Caco-2 (cell line): ENCODE measurements at regions of chr16 and their contacts with region 1.

Region 1: DNA sequence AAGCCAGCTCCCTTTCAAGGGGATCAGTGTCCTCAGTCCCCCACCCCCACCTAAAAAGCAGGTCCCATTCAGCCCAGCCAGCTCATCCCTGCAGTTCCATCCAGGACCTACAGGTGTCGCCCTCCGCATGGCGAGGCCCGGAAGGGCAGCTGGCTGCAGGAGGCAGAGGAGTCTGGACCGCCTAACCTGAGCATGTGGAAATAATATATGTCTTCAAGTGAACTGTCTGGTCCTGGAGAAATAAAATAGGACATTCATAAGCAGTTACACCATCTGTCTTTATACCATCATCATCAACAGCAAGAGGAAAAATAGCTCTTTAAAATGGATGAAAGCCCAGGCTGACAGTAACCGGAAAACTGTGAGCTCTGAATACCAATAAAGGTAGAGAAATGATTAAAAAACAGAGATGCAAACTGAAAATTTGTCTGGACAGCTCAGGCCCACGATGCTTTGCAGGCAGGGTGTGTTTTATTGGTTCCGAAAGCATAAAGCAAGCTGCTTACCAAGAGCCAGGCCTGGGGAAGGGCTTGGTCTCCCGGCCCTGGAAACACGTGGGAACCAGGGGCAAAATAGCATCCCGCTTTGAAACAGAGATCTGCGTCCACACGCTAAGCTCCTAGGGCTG is 215.2 kb downstream of the ZFHX3 start:
- DNase-seq: peak; percentile 84 to 93
- H3K4me3 ChIP-seq: no peak overlapping the region
- H3K4me3 Mint-ChIP-seq: no peak overlapping the region
- H3K27ac Mint-ChIP-seq: no peak overlapping the region
- H3K4me1 ChIP-seq: peaks cover 17% of the 10 kb centered on the region
- H3K4me1 Mint-ChIP-seq: no peaks in the 10 kb centered on the region
- H3K27me3 ChIP-seq: no peaks in the 10 kb centered on the region
- H3K27me3 Mint-ChIP-seq: no peaks in the 10 kb centered on the region
- CTCF ChIP-seq: peak; percentile 97 to 99

Region 2: GRCh38 chr16:72612256-72612655 is 220.5 kb before region 1 on chr16:
- CTCF ChIA-PET with region 1: no interaction called
- POLR2A ChIA-PET with region 1: no interaction called
- intact Hi-C with region 1: no loop called
- DNase-seq: no peak
- H3K4me3 ChIP-seq: no peak overlapping the region
- H3K4me3 Mint-ChIP-seq: no peak overlapping the region
- H3K27ac Mint-ChIP-seq: no peak overlapping the region
- H3K4me1 ChIP-seq: no peaks in the 10 kb centered on the region
- H3K4me1 Mint-ChIP-seq: no peaks in the 10 kb centered on the region
- H3K27me3 ChIP-seq: no peaks in the 10 kb centered on the region
- H3K27me3 Mint-ChIP-seq: no peaks in the 10 kb centered on the region
- CTCF ChIP-seq: no peak

Region 3: DNA sequence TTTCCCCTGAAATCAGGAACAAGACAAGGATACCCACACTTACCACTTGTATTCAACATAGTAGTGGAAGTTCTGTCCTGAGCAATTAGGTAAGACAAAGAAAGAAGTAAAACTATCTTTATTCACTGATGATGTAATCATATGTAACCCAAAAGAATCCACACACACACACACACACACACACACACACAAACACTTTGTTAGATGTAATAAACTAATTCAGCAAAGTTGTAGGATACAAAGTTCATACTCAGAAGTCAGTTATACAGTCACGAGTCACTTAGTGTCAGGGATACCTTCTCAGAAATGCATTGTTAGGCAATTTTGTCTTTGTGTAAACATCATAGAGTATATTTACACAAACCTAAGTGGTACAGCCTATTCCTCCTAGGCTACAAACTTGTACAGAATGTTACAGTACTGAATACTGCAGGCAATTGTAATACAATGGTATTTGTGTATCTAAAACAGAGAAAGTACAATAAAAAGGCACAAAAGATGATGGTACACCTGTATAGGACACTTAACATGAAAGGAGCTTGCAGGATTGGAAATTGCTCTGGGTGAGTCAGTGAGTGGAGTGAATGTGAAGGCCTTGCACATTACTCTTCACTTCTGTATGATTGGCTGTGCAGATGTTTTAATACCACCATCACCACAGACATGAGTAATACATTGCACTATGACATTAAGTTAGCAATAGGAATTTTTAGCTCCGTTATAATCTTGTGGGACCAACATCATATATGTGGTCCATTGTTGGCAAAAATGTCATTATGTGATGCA is 154.9 kb before region 1 on chr16:
- CTCF ChIA-PET with region 1: no interaction called
- POLR2A ChIA-PET with region 1: no interaction called
- intact Hi-C with region 1: loop called (anchors 5 kb)
- DNase-seq: peak; percentile 46 to 67
- H3K4me3 ChIP-seq: no peak overlapping the region
- H3K4me3 Mint-ChIP-seq: no peak overlapping the region
- H3K27ac Mint-ChIP-seq: peak overlapping the region; percentile 14
- H3K4me1 ChIP-seq: peaks cover 9% of the 10 kb centered on the region
- H3K4me1 Mint-ChIP-seq: peaks cover 6% of the 10 kb centered on the region
- H3K27me3 ChIP-seq: no peaks in the 10 kb centered on the region
- H3K27me3 Mint-ChIP-seq: no peaks in the 10 kb centered on the region
- CTCF ChIP-seq: no peak

Region 4: GRCh38 chr16:72751076-72751475 is 81.7 kb before region 1 on chr16:
- CTCF ChIA-PET with region 1: no interaction called
- POLR2A ChIA-PET with region 1: no interaction called
- intact Hi-C with region 1: no loop called
- DNase-seq: no peak
- H3K4me3 ChIP-seq: no peak overlapping the region
- H3K4me3 Mint-ChIP-seq: no peak overlapping the region
- H3K27ac Mint-ChIP-seq: no peak overlapping the region
- H3K4me1 ChIP-seq: 0 out of 2 replicates have a peak, but pooled peaks cover 11% of the 10 kb centered on the region
- H3K4me1 Mint-ChIP-seq: no peaks in the 10 kb centered on the region
- H3K27me3 ChIP-seq: no peaks in the 10 kb centered on the region
- H3K27me3 Mint-ChIP-seq: no peaks in the 10 kb centered on the region
- CTCF ChIP-seq: no peak

Region 5: GRCh38 chr16:72864130-72864830 is 31.5 kb after region 1 on chr16:
- CTCF ChIA-PET with region 1: interaction called, 12 read pairs
- POLR2A ChIA-PET with region 1: no interaction called
- intact Hi-C with region 1: no loop called
- DNase-seq: no peak
- H3K4me3 ChIP-seq: no peak overlapping the region
- H3K4me3 Mint-ChIP-seq: no peak overlapping the region
- H3K27ac Mint-ChIP-seq: no peak overlapping the region
- H3K4me1 ChIP-seq: no peaks in the 10 kb centered on the region
- H3K4me1 Mint-ChIP-seq: peaks cover 10% of the 10 kb centered on the region
- H3K27me3 ChIP-seq: no peaks in the 10 kb centered on the region
- H3K27me3 Mint-ChIP-seq: no peaks in the 10 kb centered on the region
- CTCF ChIP-seq: no peak

Region 6: DNA sequence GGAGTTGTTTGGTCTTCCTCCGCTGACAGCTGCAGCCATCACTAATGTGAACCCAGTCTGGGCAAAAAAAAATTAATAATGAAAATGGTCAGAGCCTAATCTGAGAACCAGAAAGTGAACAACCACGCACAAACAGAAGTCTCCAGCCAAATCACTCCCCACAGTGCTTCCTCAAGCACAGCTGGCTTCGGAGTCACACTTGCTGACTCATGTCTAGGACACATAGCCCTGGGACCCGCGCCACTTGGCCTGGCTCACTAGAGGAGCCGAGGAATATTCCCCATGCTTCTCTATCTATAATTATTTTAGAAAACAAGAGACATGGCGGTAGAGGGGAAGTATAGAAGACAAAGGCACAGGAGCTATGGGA is 106.0 kb after region 1 on chr16:
- CTCF ChIA-PET with region 1: interaction called, 7 read pairs
- POLR2A ChIA-PET with region 1: no interaction called
- intact Hi-C with region 1: loop called (anchors 10 kb)
- DNase-seq: no peak
- H3K4me3 ChIP-seq: no peak overlapping the region
- H3K4me3 Mint-ChIP-seq: no peak overlapping the region
- H3K27ac Mint-ChIP-seq: peak overlapping the region; percentile 76
- H3K4me1 ChIP-seq: peaks cover 66% of the 10 kb centered on the region
- H3K4me1 Mint-ChIP-seq: peaks cover 58% of the 10 kb centered on the region
- H3K27me3 ChIP-seq: no peaks in the 10 kb centered on the region
- H3K27me3 Mint-ChIP-seq: no peaks in the 10 kb centered on the region
- CTCF ChIP-seq: no peak

Region 7: DNA sequence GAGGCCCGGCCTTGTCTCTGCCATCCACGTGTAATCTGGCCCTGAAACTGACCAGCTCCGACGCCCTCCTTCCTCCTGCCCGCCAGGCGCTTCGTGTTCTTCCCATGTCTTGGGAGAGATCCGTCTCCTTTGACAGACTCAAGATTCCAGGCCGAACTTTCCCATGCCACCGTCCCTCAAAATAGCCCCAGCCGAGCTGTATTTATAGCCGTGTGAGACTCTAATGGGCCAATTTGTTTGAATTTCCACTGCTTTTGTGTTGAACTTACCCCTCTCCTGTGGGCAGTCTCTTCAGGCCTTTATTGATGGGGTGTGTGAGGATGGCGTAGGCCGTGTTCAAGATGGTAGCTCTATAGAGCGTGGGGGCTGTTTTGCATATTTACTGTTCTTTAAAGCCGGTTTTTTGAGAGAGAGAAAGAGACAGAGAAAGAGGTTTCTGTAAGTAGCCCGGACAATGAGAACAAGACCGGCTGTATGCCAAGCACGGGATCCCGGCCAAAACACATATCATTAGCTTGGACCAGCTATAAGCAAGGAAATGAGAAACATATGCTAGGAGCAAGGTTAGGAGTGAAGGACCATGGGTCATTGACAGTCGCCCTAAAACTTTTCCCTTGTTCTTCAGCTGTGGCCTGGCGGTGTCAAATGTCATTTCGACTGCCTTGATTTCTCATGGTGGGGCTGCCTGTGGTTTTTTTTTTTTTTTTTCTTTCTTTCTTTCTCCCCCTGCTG is 339.7 kb after region 1 on chr16:
- CTCF ChIA-PET with region 1: interaction called, 12 read pairs
- POLR2A ChIA-PET with region 1: no interaction called
- intact Hi-C with region 1: no loop called
- DNase-seq: no peak
- H3K4me3 ChIP-seq: no peak overlapping the region
- H3K4me3 Mint-ChIP-seq: no peak overlapping the region
- H3K27ac Mint-ChIP-seq: no peak overlapping the region
- H3K4me1 ChIP-seq: 0 out of 2 replicates have a peak, but pooled peaks cover 7% of the 10 kb centered on the region
- H3K4me1 Mint-ChIP-seq: peaks cover 7% of the 10 kb centered on the region
- H3K27me3 ChIP-seq: no peaks in the 10 kb centered on the region
- H3K27me3 Mint-ChIP-seq: peaks cover 5% of the 10 kb centered on the region
- CTCF ChIP-seq: peak in 1 of 2 experiments; percentile 43